ENCODE measurements at regions of chr4 and their contacts with region 1.

Region 1: DNA sequence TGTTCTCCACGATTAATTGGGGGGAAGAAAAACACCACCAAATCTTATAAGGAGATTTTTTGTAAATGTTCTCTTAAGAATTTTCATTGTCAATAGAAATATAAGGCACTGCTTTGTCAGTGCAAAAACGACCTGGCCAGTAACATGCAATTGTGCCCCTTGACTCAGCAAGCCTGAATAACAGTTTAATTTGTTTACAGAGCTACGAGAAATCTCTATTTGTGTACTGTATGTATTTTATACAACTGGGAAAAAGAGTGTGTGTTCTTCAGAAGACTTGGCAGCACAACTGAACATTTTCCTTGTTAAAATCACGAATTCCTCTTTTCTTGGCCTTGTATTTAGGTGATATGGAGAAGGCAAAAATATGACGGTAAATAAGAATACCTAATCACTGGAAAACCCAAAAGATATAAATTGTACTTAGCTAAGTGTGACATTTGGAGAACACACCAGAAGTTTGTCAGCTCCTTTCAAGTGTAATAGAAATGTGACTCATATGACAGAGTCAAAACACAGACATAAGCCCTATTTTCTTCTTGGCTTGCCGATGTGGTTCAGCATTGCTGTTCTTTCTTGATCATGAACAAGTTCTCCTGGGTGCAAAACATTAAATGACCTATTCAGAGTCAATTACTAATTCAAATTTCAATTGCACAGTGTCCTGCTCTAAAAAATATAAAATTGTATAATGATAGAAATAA is 945.0 kb upstream of the INTU start:
- DNase-seq: no peak
- H3K4me3 ChIP-seq: no peak overlapping the region
- H3K27ac ChIP-seq: no peak overlapping the region
- H3K4me1 ChIP-seq: no peaks in the 10 kb centered on the region
- H3K27me3 ChIP-seq: no peaks in the 10 kb centered on the region
- CTCF ChIP-seq: no peak

Region 2: GRCh38 chr4:126661194-126661593 is 26.6 kb before region 1 on chr4:
- CTCF ChIA-PET with region 1: no interaction called
- POLR2A ChIA-PET with region 1: interaction called, 14 read pairs
- intact Hi-C with region 1: no loop called
- DNase-seq: no peak
- H3K4me3 ChIP-seq: no peak overlapping the region
- H3K27ac ChIP-seq: no peak overlapping the region
- H3K4me1 ChIP-seq: no peaks in the 10 kb centered on the region
- H3K27me3 ChIP-seq: no peaks in the 10 kb centered on the region
- CTCF ChIP-seq: no peak